ENCODE measurements at regions of chr6 and their contacts with region 1.

Region 1: DNA sequence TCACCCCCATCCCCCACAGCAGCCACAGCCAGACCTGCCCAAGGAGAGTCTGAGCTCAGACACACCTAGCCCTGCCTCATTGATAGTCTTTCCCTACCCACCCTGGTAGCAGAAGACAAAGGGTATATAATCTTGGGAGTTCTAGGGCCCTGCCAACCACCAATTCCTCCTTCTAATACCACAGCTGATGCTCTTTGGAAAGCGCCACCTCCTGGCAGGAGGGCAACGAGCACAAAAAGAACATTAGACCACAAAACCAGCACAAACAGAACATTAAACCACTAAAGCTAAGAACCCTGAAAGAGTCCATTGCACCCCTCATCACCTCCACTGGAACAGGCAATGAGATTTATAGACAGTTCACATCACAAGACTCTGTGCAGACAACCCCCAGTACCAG is 195.8 kb upstream of the FUT9 start:
- DNase-seq: peak in 1 of 2 experiments; percentile 62
- H3K4me3 ChIP-seq: no peak overlapping the region
- H3K27ac ChIP-seq: no peak overlapping the region
- H3K4me1 ChIP-seq: no peaks in the 10 kb centered on the region
- H3K27me3 ChIP-seq: no peaks in the 10 kb centered on the region
- CTCF ChIP-seq: peak; percentile 44 to 54 (median 46)
- EP300 ChIP-seq: no peak
- POLR2A ChIP-seq: no peak
- RAD21 ChIP-seq: peak; percentile 29 to 56; a peak in 2 of 4 replicates

Region 2: GRCh38 chr6:95804847-95805541 is 14.9 kb before region 1 on chr6:
- CTCF ChIA-PET with region 1: interaction called, 14 read pairs
- POLR2A ChIA-PET with region 1: no interaction called
- DNase-seq: no peak
- H3K4me3 ChIP-seq: no peak overlapping the region
- H3K27ac ChIP-seq: no peak overlapping the region
- H3K4me1 ChIP-seq: peaks cover 0 to 11% (median 0%) of the 10 kb centered on the region in 4 experiments; a peak in 3 of 7 replicates
- H3K27me3 ChIP-seq: peaks cover 22 to 53% (median 40%) of the 10 kb centered on the region in 4 experiments
- CTCF ChIP-seq: no peak
- EP300 ChIP-seq: no peak
- POLR2A ChIP-seq: no peak
- RAD21 ChIP-seq: no peak

Region 3: DNA sequence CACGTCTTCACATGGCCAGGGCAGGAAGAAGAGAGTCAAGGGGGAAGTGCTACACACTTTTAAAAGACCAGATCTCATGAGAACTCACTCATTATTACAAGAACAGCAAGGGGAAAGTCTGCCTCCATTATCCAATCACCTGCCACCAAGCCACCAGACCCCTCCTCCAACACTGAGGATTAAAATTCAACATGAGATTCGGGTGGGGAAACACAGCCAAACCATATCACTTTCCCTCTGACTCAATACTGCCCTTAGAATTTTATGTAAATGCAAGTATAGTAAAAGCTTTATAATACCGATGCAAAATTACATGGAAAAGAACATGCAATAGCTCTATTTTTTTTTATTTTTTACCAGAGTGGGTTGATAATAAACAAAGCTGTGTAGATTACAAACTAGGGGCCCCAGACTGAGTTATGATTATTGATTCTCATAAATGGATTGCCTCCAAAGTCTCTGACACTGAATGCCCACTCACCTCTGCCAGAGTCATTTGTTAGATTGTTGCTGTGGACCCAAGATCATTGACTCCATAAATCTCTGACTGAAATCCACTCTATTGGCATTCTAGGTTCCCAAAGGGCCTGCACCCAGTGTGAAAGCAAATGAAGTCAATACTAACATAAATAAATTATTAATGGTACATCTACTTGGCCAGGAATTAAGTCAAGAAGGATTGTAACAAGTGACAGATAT is 11.1 kb after region 1 on chr6:
- CTCF ChIA-PET with region 1: interaction called, 26 read pairs
- POLR2A ChIA-PET with region 1: no interaction called
- DNase-seq: no peak
- H3K4me3 ChIP-seq: no peak overlapping the region
- H3K27ac ChIP-seq: no peak overlapping the region
- H3K4me1 ChIP-seq: no peaks in the 10 kb centered on the region
- H3K27me3 ChIP-seq: no peaks in the 10 kb centered on the region
- CTCF ChIP-seq: no peak
- EP300 ChIP-seq: no peak
- POLR2A ChIP-seq: no peak
- RAD21 ChIP-seq: no peak

Region 4: GRCh38 chr6:95841560-95841959 is 21.6 kb after region 1 on chr6:
- CTCF ChIA-PET with region 1: interaction called, 19 read pairs
- POLR2A ChIA-PET with region 1: no interaction called
- DNase-seq: no peak
- H3K4me3 ChIP-seq: no peak overlapping the region
- H3K27ac ChIP-seq: no peak overlapping the region
- H3K4me1 ChIP-seq: no peaks in the 10 kb centered on the region
- H3K27me3 ChIP-seq: no peaks in the 10 kb centered on the region
- CTCF ChIP-seq: no peak
- EP300 ChIP-seq: no peak
- POLR2A ChIP-seq: no peak
- RAD21 ChIP-seq: peak; percentile 30 to 31; a peak in 3 of 4 replicates